CD8-positive, alpha-beta T cell (primary cell): ENCODE measurements at regions of chr6 and their contacts with region 1.

Region 1: GRCh38 chr6:169701954-169702839 is at the starts of genes C6orf120 and WDR27:
- DNase-seq: peak; percentile 92 to 98 (median 97)
- ATAC-seq: peak; percentile 87
- H3K4me3 ChIP-seq: peak within 1 kb of the TSS; percentile 72 to 92
- H3K4me3 Mint-ChIP-seq: peak within 1 kb of the TSS; percentile 91
- H3K27ac ChIP-seq: peak within 1 kb of the TSS; percentile 95
- H3K27ac Mint-ChIP-seq: peak within 1 kb of the TSS; percentile 94
- H3K4me1 ChIP-seq: peaks cover 38% of the 10 kb centered on the region
- H3K4me1 Mint-ChIP-seq: peaks cover 55% of the 10 kb centered on the region
- H3K27me3 ChIP-seq: no peaks in the 10 kb centered on the region
- H3K27me3 Mint-ChIP-seq: no peaks in the 10 kb centered on the region
- CTCF ChIP-seq: no peak
- total RNA-seq, gene C6orf120: 19.9 TPM
- total RNA-seq, gene WDR27: 18.5 to 19.2 TPM

Region 2: DNA sequence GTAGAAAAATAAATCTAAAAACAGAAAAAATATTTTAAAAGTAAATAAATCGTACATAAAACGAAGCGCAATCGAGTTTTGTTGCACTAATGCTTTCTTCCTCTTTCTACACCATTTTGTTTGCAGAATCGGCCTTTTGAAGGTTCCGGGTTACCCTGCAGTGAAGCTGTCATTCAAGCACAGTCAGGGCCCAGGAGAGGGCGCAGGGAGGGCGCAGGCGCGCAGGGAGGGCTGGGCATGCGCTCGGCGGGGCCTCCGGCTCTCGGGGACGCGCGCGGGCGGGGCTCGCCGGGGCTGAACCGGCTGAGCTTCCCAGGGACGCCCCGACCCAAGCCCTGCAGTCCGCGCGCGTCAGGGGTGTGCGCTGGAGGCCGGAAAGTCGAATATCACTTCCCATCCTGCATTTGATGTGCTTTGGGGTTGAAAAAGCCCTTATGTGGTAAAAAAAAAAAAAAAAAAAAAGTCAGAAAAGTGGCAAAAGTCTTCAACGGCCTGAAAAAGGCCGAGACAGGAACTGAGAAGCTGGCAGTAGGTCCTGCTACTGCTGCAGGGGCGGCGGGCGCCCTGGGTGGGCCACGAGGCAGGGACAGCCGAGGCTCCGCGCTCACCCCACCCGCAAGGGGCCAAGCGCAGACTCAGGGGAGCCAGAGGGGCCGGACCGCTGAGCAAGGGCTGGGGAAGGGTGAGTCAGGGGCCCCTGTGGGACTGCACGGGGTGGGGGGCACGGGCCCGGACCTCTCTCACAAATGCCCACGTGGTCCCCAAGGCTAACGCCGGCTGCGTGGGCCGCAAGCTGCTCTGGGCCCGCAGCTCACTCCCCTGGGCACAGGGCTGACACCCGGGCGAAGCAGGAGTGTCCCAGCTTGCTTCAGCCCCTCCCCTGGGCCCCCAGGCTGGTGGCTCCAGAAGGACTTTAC is 489.0 kb before region 1 on chr6:
- CTCF ChIA-PET with region 1: no interaction called
- POLR2A ChIA-PET with region 1: interaction called, 4 read pairs
- intact Hi-C with region 1: loop called (anchors 5 to 10 kb)
- DNase-seq: peak; percentile 80 to 95 (median 86)
- ATAC-seq: peak; percentile 99
- H3K4me3 ChIP-seq: peak overlapping the region; percentile 20 to 23
- H3K4me3 Mint-ChIP-seq: peak overlapping the region; percentile 72
- H3K27ac ChIP-seq: peak overlapping the region in 1 of 2 experiments; percentile 66
- H3K27ac Mint-ChIP-seq: peak overlapping the region; percentile 78
- H3K4me1 ChIP-seq: peaks cover 7% of the 10 kb centered on the region
- H3K4me1 Mint-ChIP-seq: peaks cover 9% of the 10 kb centered on the region
- H3K27me3 ChIP-seq: no peaks in the 10 kb centered on the region
- H3K27me3 Mint-ChIP-seq: no peaks in the 10 kb centered on the region
- CTCF ChIP-seq: no peak

Region 3: GRCh38 chr6:169665289-169665688 is 36.9 kb before region 1 on chr6:
- CTCF ChIA-PET with region 1: no interaction called
- POLR2A ChIA-PET with region 1: no interaction called
- intact Hi-C with region 1: no loop called
- DNase-seq: no peak
- ATAC-seq: no peak
- H3K4me3 ChIP-seq: no peak overlapping the region
- H3K4me3 Mint-ChIP-seq: no peak overlapping the region
- H3K27ac ChIP-seq: no peak overlapping the region
- H3K27ac Mint-ChIP-seq: no peak overlapping the region
- H3K4me1 ChIP-seq: no peaks in the 10 kb centered on the region
- H3K4me1 Mint-ChIP-seq: peaks cover 4% of the 10 kb centered on the region
- H3K27me3 ChIP-seq: no peaks in the 10 kb centered on the region
- H3K27me3 Mint-ChIP-seq: no peaks in the 10 kb centered on the region
- CTCF ChIP-seq: no peak

Region 4: GRCh38 chr6:169723200-169723909 is 21.2 kb after region 1 on chr6:
- CTCF ChIA-PET with region 1: interaction called, 14 read pairs
- POLR2A ChIA-PET with region 1: interaction called, 122 read pairs
- intact Hi-C with region 1: loop called (anchors 1 kb)
- DNase-seq: peak; percentile 47 to 85 (median 66)
- ATAC-seq: peak; percentile 30
- H3K4me3 ChIP-seq: peak overlapping the region; percentile 68 to 79
- H3K4me3 Mint-ChIP-seq: peak overlapping the region; percentile 85
- H3K27ac ChIP-seq: peak overlapping the region; percentile 72 to 84
- H3K27ac Mint-ChIP-seq: peak overlapping the region; percentile 96
- H3K4me1 ChIP-seq: peaks cover 22% of the 10 kb centered on the region
- H3K4me1 Mint-ChIP-seq: peaks cover 42% of the 10 kb centered on the region
- H3K27me3 ChIP-seq: no peaks in the 10 kb centered on the region
- H3K27me3 Mint-ChIP-seq: no peaks in the 10 kb centered on the region
- CTCF ChIP-seq: no peak

Region 5: GRCh38 chr6:169763308-169763707 is 61.1 kb after region 1 on chr6:
- CTCF ChIA-PET with region 1: no interaction called
- POLR2A ChIA-PET with region 1: no interaction called
- intact Hi-C with region 1: no loop called
- DNase-seq: no peak
- ATAC-seq: no peak
- H3K4me3 ChIP-seq: no peak overlapping the region
- H3K4me3 Mint-ChIP-seq: no peak overlapping the region
- H3K27ac ChIP-seq: no peak overlapping the region
- H3K27ac Mint-ChIP-seq: no peak overlapping the region
- H3K4me1 ChIP-seq: no peaks in the 10 kb centered on the region
- H3K4me1 Mint-ChIP-seq: no peaks in the 10 kb centered on the region
- H3K27me3 ChIP-seq: no peaks in the 10 kb centered on the region
- H3K27me3 Mint-ChIP-seq: no peaks in the 10 kb centered on the region
- CTCF ChIP-seq: no peak

Region 6: GRCh38 chr6:169959136-169960002 is 257.2 kb after region 1 on chr6:
- CTCF ChIA-PET with region 1: no interaction called
- POLR2A ChIA-PET with region 1: no interaction called
- intact Hi-C with region 1: loop called in 1 of 2 experiments (anchors 10 kb)
- DNase-seq: peak; percentile 42 to 90 (median 61)
- ATAC-seq: peak; percentile 93
- H3K4me3 ChIP-seq: peak overlapping the region; percentile 0 to 3
- H3K4me3 Mint-ChIP-seq: peak overlapping the region; percentile 65
- H3K27ac ChIP-seq: peak overlapping the region; percentile 50 to 53
- H3K27ac Mint-ChIP-seq: peak overlapping the region; percentile 94
- H3K4me1 ChIP-seq: peaks cover 15% of the 10 kb centered on the region
- H3K4me1 Mint-ChIP-seq: peaks cover 26% of the 10 kb centered on the region
- H3K27me3 ChIP-seq: peaks cover 0 to 7% of the 10 kb centered on the region in 2 experiments
- H3K27me3 Mint-ChIP-seq: peaks cover 3% of the 10 kb centered on the region
- CTCF ChIP-seq: peak; percentile 33

Region 7: DNA sequence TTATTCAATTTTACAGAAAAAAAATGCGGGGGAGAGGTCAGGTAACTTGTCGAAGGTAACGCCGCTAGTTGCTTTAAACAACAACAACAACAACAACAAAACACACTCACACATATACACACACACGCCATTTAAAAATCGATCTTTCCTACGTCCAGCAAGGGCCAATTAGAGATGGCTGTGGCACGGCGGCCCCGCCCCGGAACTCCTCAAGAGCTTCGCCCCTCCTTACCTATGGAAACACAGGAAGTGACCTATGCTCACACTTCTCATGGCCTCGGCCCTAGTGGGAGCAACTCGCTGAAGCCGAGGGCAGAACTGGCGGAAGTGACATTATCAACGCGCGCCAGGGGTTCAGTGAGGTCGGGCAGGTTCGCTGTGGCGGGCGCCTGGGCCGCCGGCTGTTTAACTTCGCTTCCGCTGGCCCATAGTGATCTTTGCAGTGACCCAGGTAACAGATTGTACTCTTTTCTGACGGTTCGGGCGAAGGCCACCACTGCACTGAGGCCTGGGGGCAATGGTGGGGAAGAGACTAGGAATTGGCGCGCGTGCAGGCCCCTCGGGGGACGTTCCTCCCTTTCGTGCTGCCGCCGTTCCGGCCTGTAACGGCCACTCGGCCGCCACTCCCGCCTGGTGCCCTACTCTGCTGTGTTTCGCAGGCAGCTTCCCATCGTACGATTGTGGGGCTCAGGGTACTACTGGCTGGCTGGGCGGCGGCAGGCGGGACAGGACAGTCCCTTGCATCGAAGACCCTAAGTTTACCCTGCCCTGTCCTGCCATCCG is 852.0 kb after region 1 on chr6 and contains the start of gene TBP:
- CTCF ChIA-PET with region 1: no interaction called
- POLR2A ChIA-PET with region 1: interaction called, 6 read pairs
- intact Hi-C with region 1: loop called (anchors 1 kb)
- DNase-seq: peak; percentile 93 to 99 (median 98)
- ATAC-seq: peak; percentile 91
- H3K4me3 ChIP-seq: peak within 1 kb of the TSS; percentile 61 to 93
- H3K4me3 Mint-ChIP-seq: no peak within 1 kb of the TSS
- H3K27ac ChIP-seq: peak within 1 kb of the TSS; percentile 89 to 96
- H3K27ac Mint-ChIP-seq: no peak within 1 kb of the TSS
- H3K4me1 ChIP-seq: peaks cover 39% of the 10 kb centered on the region
- H3K4me1 Mint-ChIP-seq: peaks cover 38% of the 10 kb centered on the region
- H3K27me3 ChIP-seq: no peaks in the 10 kb centered on the region
- H3K27me3 Mint-ChIP-seq: no peaks in the 10 kb centered on the region
- CTCF ChIP-seq: no peak
- total RNA-seq, gene TBP: 13.8 to 13.9 TPM